CD8-positive, alpha-beta memory T cell (primary cell): ENCODE measurements at regions of chr17 and their contacts with region 1.

Region 1: GRCh38 chr17:29664743-29665480 is 42.2 kb upstream of the CORO6 start:
- DNase-seq: no peak
- H3K4me3 ChIP-seq: no peak overlapping the region
- H3K4me3 Mint-ChIP-seq: no peak overlapping the region
- H3K27ac ChIP-seq: no peak overlapping the region
- H3K27ac Mint-ChIP-seq: peak overlapping the region in 5 of 8 donors; percentile 31 to 66 (median 50)
- H3K4me1 ChIP-seq: no peaks in the 10 kb centered on the region
- H3K4me1 Mint-ChIP-seq: peaks cover 7 to 27% (median 16%) of the 10 kb centered on the region in 3 donors
- H3K27me3 ChIP-seq: no peaks in the 10 kb centered on the region
- H3K27me3 Mint-ChIP-seq: no peaks in the 10 kb centered on the region

Region 2: DNA sequence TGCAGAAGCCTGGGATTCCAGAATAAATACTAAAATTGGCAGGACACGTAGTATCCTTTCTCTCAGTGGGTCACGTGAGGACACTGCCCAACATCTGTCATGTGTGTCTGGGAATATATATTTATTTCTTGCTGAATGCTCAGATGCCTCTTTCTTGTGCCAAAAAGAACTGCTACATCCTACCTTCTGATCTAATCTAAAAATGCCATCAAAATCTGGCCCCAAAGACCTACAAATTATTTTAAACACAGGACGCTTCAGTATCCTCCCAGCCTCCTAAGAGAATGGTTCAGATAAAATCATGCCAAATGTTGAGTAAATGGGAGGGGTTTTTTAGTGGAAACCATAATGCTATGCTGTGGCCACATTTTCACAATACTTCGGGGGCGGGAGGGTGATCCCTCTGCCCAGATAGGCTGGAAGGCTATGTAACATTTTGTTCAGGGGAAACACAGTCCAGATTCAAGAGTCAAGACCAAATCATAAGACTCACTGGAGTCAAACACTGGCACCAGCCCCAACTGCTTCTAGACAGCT is 19.3 kb before region 1 on chr17:
- CTCF ChIA-PET with region 1: no interaction called
- POLR2A ChIA-PET with region 1: no interaction called
- DNase-seq: no peak
- H3K4me3 ChIP-seq: no peak overlapping the region
- H3K4me3 Mint-ChIP-seq: no peak overlapping the region
- H3K27ac ChIP-seq: no peak overlapping the region
- H3K27ac Mint-ChIP-seq: peak overlapping the region in 5 of 8 donors; percentile 13 to 71 (median 36)
- H3K4me1 ChIP-seq: no peaks in the 10 kb centered on the region
- H3K4me1 Mint-ChIP-seq: peaks cover 3 to 10% (median 4%) of the 10 kb centered on the region in 3 donors
- H3K27me3 ChIP-seq: no peaks in the 10 kb centered on the region
- H3K27me3 Mint-ChIP-seq: no peaks in the 10 kb centered on the region

Region 3: DNA sequence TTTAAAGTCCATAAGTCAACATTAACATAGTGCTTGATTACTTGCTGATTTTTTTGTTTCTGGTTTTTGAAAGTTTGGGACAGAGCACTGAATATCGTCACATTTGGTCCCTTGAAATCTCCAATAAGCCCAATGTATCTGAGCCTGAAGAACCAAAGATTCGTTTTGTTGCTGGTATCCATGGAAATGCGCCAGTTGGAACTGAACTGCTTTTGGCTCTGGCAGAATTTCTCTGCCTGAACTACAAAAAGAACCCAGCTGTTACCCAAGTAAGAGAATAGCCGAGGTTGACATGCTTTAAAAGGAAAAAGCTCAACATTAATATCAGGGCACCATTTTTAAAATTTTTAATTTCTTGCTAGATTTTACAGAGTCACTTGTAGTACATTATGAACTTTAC is 784.6 kb after region 1 on chr17:
- CTCF ChIA-PET with region 1: no interaction called
- POLR2A ChIA-PET with region 1: interaction called, 10 read pairs
- DNase-seq: no peak
- H3K4me3 ChIP-seq: no peak overlapping the region
- H3K4me3 Mint-ChIP-seq: no peak overlapping the region
- H3K27ac ChIP-seq: no peak overlapping the region
- H3K27ac Mint-ChIP-seq: no peak overlapping the region
- H3K4me1 ChIP-seq: no peaks in the 10 kb centered on the region
- H3K4me1 Mint-ChIP-seq: peaks cover 10 to 15% (median 11%) of the 10 kb centered on the region in 3 donors
- H3K27me3 ChIP-seq: no peaks in the 10 kb centered on the region
- H3K27me3 Mint-ChIP-seq: no peaks in the 10 kb centered on the region